Heart left ventricle (tissue), 16 donors: ENCODE measurements at regions of chr14 and their contacts with region 1.

Region 1: DNA sequence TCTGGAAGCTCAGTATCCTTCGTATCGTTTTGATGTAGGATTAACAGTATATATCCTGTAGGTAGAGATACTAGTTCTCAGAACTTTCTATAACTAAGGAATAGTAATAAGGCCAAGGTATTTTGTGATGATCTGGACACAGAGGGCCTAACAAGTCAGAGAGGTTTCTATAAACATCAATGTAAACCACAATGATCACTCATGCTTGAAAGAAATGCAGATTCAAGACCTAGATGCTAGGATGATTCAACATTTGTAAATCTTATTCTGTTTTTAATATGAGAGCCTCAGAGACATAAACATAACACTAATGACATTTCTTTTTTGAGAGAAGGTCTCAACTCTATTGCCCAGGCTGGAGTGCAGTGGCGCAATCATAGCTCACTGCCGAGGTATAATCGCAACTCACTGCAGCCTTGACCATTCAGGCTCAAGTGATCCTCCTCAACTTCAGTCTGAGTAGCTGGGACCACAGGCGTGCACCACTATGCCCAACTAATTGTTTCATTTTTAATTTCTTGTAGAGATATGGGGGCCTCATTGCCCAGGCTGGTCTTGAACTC is 16.2 kb downstream of the SUPT16H start:
- DNase-seq: no peak
- ATAC-seq: no peak
- H3K4me3 ChIP-seq: no peak overlapping the region
- H3K27ac ChIP-seq: no peak overlapping the region
- H3K4me1 ChIP-seq: peaks cover 0 to 7% (median 0%) of the 10 kb centered on the region in 12 donors
- H3K27me3 ChIP-seq: no peaks in the 10 kb centered on the region
- CTCF ChIP-seq: no peak
- POLR2A ChIP-seq: no peak

Region 2: DNA sequence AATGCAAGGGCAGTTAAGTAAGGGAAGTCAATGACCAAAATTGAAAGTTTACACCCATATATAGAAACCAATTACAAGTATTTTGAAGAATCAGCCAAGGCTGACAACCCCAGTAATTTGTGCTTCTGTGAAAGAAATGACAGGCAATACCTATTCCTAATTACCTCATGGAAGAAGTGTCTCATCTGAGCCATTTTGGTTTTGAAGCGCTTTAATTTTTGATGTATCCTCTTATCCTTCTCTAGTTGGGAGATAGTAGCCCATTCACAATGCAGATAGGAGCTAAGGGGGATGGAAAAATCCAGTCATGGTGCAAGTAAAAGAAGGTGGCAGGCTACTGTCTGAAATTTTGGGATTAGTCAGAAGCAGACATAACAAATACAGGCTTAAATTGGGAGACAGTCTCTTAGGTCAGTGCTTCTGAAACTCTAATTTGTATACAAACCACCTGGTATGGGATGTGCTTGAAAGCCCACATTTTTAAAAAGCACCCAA is 46.5 kb after region 1 on chr14:
- intact Hi-C with region 1: loop called in 2 of 10 experiments (anchors 10 kb)
- DNase-seq: no peak
- ATAC-seq: no peak
- H3K4me3 ChIP-seq: no peak overlapping the region
- H3K27ac ChIP-seq: no peak overlapping the region
- H3K4me1 ChIP-seq: no peaks in the 10 kb centered on the region
- H3K27me3 ChIP-seq: no peaks in the 10 kb centered on the region
- CTCF ChIP-seq: no peak
- POLR2A ChIP-seq: no peak

Region 3: GRCh38 chr14:21612324-21612723 is 244.7 kb after region 1 on chr14:
- intact Hi-C with region 1: no loop called
- DNase-seq: no peak
- ATAC-seq: no peak
- H3K4me3 ChIP-seq: no peak overlapping the region
- H3K27ac ChIP-seq: no peak overlapping the region
- H3K4me1 ChIP-seq: no peaks in the 10 kb centered on the region
- H3K27me3 ChIP-seq: no peaks in the 10 kb centered on the region
- CTCF ChIP-seq: no peak
- POLR2A ChIP-seq: no peak